Ascending aorta (tissue), 2 donors: ENCODE measurements at regions of chr21 and their contacts with region 1.

Region 1: DNA sequence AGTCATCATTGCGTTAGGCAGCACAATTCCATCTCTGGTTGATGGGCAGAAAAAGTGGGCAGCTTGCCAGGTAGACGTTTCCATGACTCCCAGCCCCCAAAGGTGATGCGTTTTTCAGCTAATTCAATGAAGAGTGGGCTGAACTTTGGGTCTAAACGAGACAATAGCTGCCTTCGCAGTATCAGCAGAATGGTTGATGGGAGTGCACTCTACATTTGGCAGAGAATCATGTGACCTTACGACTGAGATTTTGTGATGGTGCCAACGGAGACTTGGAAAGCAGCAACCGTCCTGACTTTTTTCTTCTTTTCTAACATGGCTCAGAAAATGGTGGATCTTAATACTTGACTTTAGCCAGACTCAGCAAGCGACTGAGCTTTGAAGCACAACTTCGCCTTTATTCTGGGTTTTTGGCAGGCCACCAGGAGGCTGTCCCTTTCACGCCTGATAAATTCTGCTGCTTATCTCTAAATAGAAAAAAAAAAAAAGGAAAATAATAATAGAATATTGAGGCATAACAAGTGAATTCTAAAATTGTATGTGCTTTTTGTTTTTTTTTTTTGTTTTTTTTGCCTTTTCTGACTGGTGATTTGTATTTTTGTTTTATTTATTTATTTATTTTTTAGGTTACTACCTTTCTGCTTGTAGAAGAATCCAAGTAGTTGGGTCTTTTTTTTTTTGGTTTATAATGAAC is 804.8 kb downstream of the USP25 start:
- DNase-seq: peak in 1 of 2 donors; percentile 77
- H3K4me3 ChIP-seq: peak overlapping the region; percentile 46 to 62
- H3K27ac ChIP-seq: peak overlapping the region; percentile 84 to 85
- H3K4me1 ChIP-seq: no peaks in the 10 kb centered on the region
- H3K27me3 ChIP-seq: no peaks in the 10 kb centered on the region
- CTCF ChIP-seq: no peak

Region 2: GRCh38 chr21:16573578-16573977 is 39.0 kb after region 1 on chr21:
- intact Hi-C with region 1: loop called (anchors 5 kb)
- DNase-seq: no peak
- H3K4me3 ChIP-seq: no peak overlapping the region
- H3K27ac ChIP-seq: peak overlapping the region in 1 of 2 donors; percentile 5
- H3K4me1 ChIP-seq: peaks cover 0 to 6% of the 10 kb centered on the region in 2 donors
- H3K27me3 ChIP-seq: no peaks in the 10 kb centered on the region
- CTCF ChIP-seq: no peak

Region 3: DNA sequence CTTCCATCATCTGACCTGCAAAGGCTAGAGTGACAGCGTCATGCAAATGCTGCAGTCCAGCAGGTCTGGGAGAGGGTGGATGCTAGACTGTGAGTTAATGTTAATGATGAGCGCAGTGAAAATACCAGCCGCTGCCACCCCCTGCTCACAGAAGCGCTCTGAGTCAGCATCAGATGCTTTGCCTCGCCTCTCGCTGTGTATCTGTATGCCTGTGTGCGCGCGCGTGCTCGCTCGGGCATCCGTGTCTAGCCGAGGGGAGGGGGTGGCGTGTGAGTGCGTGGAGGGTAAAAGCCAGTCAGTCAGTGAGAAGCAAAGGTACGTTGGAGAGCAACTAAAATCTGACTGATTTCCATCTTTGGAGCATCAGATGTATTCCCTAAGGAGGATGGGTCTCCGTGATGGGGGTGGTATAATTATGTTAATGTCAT is 53.9 kb after region 1 on chr21:
- intact Hi-C with region 1: loop called (anchors 2 kb)
- DNase-seq: peak; percentile 20 to 81
- H3K4me3 ChIP-seq: peak overlapping the region; percentile 51 to 68
- H3K27ac ChIP-seq: peak overlapping the region; percentile 69 to 73
- H3K4me1 ChIP-seq: peaks cover 0 to 8% of the 10 kb centered on the region in 2 donors
- H3K27me3 ChIP-seq: no peaks in the 10 kb centered on the region
- CTCF ChIP-seq: no peak